ENCODE measurements at regions of chr1 and their contacts with region 1.

Region 1: GRCh38 chr1:81912383-81912782 is 111.6 kb downstream of the ADGRL2 start:
- DNase-seq: peak; percentile 17
- H3K4me3 Mint-ChIP-seq: no peak overlapping the region
- H3K27ac Mint-ChIP-seq: peak overlapping the region; percentile 30
- H3K4me1 Mint-ChIP-seq: peaks cover 9% of the 10 kb centered on the region
- H3K27me3 Mint-ChIP-seq: no peaks in the 10 kb centered on the region
- CTCF ChIP-seq: no peak

Region 2: DNA sequence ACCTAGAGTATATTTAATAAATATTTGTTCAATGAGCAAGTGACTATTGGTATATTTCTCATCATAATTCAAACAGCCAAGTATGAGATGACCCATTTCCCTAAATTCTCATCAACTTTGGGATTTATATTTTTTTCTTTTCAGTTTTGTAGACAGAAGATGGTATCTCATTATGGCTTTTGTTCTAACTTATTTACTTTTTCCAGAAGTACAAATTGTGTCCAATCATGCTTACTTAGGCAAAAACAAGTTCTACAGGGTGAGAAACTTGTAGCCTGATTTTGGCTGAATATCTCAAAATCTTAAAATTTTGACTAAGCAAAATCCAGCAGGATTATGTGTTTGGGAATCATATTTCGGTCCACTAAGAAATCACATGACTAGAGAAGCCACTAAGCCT is 184.4 kb before region 1 on chr1:
- CTCF ChIA-PET with region 1: no interaction called
- intact Hi-C with region 1: no loop called
- DNase-seq: no peak
- H3K4me3 Mint-ChIP-seq: no peak overlapping the region
- H3K27ac Mint-ChIP-seq: no peak overlapping the region
- H3K4me1 Mint-ChIP-seq: peaks cover 32% of the 10 kb centered on the region
- H3K27me3 Mint-ChIP-seq: no peaks in the 10 kb centered on the region
- CTCF ChIP-seq: no peak

Region 3: DNA sequence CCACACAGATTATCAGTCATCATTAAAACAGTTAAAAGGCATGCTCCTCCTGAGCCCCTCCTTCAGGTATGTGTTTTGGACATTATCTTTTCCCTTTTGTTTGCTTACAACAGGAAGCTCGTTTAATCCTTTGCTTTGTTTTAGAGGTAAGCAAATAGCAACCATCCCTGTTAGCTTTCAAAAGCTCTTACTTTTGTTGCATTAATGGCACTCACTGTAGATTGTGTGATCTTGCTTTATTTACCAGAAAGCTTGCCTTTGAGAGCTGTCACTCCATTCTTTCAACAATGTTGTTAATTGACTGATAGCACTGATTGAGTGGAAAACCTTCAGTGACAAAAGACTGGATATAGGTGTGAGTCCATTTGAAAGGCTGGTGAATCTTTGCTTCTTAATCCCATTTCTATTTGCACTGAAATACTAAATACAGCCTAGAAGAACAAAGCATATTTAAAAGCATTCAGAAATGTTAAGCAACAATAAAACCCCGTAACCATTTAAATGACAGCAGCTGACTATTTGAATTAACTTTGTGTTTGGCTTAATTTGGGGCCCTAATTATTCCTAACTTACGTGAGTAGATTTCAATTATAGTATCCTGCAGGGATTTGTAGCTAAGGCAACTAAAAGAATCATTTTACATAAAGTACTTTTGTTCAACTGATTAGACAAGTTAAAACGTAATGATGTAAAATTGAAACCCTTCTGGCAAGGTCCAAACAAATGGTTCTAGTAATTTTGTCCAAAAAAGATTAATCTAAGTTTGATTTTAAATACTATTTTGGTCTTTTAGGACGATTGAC is 63.3 kb before region 1 on chr1:
- CTCF ChIA-PET with region 1: no interaction called
- intact Hi-C with region 1: loop called (anchors 2 kb)
- DNase-seq: no peak
- H3K4me3 Mint-ChIP-seq: no peak overlapping the region
- H3K27ac Mint-ChIP-seq: no peak overlapping the region
- H3K4me1 Mint-ChIP-seq: peaks cover 21% of the 10 kb centered on the region
- H3K27me3 Mint-ChIP-seq: no peaks in the 10 kb centered on the region
- CTCF ChIP-seq: no peak

Region 4: DNA sequence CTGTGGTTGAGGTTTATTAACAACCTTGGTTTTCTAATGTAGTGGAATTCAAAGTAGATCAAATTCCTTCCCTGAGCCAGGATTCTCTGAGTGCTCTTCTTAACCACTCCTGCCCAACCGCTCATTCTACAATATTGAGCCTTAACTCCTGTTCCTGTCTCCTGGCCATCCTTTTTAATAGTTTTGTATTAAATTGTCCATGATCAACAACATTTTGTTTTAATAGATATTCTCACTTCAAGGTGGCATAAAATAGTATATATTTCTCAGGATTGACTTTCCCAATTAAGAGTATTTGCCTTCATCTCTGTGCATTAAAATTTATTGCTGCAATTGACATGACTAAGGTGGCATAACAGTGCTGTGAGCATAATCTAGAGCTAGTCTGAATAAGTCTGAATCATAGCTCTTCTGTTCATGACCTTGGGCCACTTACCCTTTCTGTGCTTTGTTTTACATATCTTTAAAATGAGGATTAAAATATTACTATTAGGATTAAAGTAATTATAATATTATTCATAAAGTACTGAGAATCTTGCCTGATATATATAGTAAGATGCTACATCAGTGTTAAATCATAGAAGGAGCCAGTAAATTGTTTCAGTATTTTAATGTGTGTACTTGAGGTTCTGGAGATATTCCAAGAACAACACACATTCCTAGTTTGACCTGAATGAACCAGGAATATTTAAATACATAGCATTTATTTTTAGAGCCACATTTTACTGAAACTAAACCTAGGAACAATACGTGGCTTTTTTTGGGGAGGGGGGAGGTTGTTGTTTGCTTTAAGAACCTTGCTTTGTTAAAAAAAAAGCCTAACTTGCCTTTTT is 35.3 kb before region 1 on chr1:
- CTCF ChIA-PET with region 1: no interaction called
- intact Hi-C with region 1: loop called (anchors 5 kb)
- DNase-seq: no peak
- H3K4me3 Mint-ChIP-seq: no peak overlapping the region
- H3K27ac Mint-ChIP-seq: peak overlapping the region; percentile 15
- H3K4me1 Mint-ChIP-seq: peaks cover 49% of the 10 kb centered on the region
- H3K27me3 Mint-ChIP-seq: no peaks in the 10 kb centered on the region
- CTCF ChIP-seq: no peak

Measured in Calu3 (cell line).